ENCODE measurements at regions of chr3 and their contacts with region 1.

Region 1: GRCh38 chr3:12484198-12484974 is at the start of gene TSEN2:
- DNase-seq: peak; percentile 97
- H3K4me3 ChIP-seq: peak within 1 kb of the TSS; percentile 92
- H3K27ac ChIP-seq: peak within 1 kb of the TSS; percentile 79
- H3K4me1 ChIP-seq: peaks cover 25% of the 10 kb centered on the region
- CTCF ChIP-seq: 0 out of 2 replicates have a peak, but pooled peaks have one; percentile 31
- total RNA-seq, gene TSEN2: 33.2 and 40.7 TPM in 2 replicates

Region 2: DNA sequence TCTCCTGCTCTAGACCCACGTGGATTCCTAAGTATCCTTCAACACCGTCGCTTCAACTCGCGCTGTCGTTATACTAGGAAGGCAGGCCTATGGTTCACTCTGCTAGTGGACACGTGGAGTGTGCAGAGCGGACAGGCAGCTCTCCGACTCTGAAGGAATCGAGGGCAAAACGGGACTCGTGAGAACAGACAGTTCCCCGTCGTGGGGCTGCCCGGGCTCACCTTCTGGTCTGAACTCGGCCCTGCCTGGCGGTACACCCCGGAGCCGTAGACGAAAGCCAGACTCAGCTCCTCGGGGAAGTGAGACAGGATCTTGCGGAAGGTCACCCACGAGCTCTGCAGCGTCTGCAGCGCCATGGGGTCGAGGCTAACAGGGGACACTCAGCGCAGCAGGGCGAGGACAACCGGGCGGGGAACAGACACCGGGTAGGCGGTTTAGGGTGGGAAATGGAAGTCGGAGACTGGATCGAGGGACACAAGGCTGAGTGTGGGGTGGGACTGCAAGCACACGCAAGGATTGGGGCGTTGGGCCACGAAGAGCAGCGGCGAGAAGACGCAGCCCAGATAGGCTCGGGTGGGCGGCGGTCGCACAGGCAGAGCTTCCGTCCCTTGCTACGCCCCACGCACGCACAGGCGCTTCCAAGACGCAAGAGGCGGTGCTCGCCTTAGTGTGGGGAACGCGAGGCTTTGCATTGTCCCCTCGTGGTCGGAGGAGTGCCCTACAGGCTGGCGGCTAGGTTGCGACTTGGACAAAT is 637.9 kb before region 1 on chr3 and contains the start of gene TAMM41:
- CTCF ChIA-PET with region 1: no interaction called
- POLR2A ChIA-PET with region 1: no interaction called
- intact Hi-C with region 1: loop called (anchors 5 kb)
- DNase-seq: peak; percentile 88
- H3K4me3 ChIP-seq: peak within 1 kb of the TSS; percentile 87
- H3K27ac ChIP-seq: peak within 1 kb of the TSS; percentile 14
- H3K4me1 ChIP-seq: peaks cover 6% of the 10 kb centered on the region
- CTCF ChIP-seq: peak; percentile 77
- total RNA-seq, gene TAMM41: 14.6 and 19.2 TPM in 2 replicates

Region 3: DNA sequence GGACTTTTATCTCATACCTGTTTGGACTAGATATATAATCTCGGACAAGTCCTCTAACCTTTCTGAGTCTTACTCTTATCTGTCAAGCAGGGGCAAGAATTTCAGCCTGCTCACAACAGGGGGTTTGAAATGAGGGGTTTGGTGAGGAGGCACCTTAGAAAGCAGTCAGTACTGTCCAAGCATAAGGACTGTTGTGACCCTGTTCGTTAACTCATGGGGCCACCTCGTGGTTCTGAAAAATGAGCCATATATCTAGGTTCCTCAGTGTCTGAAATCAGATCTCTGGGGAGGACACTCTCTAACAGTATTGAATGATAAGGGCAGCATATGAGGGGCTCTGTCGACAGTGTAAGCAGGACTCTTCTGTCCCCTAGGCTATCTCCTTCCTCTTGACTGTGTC is 318.5 kb before region 1 on chr3:
- CTCF ChIA-PET with region 1: no interaction called
- POLR2A ChIA-PET with region 1: no interaction called
- intact Hi-C with region 1: no loop called
- DNase-seq: no peak
- H3K4me3 ChIP-seq: no peak overlapping the region
- H3K27ac ChIP-seq: no peak overlapping the region
- H3K4me1 ChIP-seq: no peaks in the 10 kb centered on the region
- CTCF ChIP-seq: no peak

Region 4: GRCh38 chr3:12175844-12176453 is 308.4 kb before region 1 on chr3:
- CTCF ChIA-PET with region 1: no interaction called
- POLR2A ChIA-PET with region 1: no interaction called
- intact Hi-C with region 1: loop called (anchors 5 kb)
- DNase-seq: peak; percentile 27
- H3K4me3 ChIP-seq: no peak overlapping the region
- H3K27ac ChIP-seq: no peak overlapping the region
- H3K4me1 ChIP-seq: no peaks in the 10 kb centered on the region
- CTCF ChIP-seq: peak; percentile 76

Region 5: DNA sequence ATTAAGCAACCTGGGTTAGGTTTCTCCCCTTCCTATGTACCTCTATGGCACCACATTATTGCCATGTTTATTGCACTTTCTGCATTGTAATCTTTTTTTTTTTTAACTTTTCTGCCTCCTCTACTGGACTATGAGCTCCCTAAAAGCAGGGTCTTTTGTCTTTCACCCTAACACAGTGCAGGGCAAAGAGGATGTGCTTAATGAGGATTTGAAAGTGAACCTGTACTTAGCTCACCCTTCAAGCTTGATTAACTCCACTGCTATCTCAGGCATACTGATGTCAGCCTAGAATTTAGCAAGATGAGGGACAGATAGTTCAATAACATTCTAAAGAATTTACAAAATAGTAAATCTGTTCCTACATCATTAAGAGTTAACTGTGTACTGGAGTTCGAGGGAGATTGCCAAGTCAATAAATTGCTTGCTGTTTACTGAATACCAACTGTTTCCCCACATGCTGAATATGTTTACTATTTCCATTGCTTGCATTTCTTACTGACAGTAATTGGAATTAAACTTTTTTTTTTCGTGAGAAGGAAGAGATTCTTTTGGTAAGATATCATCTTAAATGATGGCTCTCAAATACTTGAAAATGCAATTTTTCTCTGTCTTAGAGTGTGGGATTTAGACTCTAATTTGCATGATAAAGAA is 211.2 kb before region 1 on chr3:
- CTCF ChIA-PET with region 1: no interaction called
- POLR2A ChIA-PET with region 1: interaction called, 3 read pairs
- intact Hi-C with region 1: loop called (anchors 10 kb)
- DNase-seq: peak; percentile 19
- H3K4me3 ChIP-seq: no peak overlapping the region
- H3K27ac ChIP-seq: no peak overlapping the region
- H3K4me1 ChIP-seq: peaks cover 10% of the 10 kb centered on the region
- CTCF ChIP-seq: no peak

Region 6: GRCh38 chr3:12716605-12717151 is 232.3 kb after region 1 on chr3:
- CTCF ChIA-PET with region 1: no interaction called
- POLR2A ChIA-PET with region 1: no interaction called
- intact Hi-C with region 1: no loop called
- DNase-seq: peak; percentile 56
- H3K4me3 ChIP-seq: no peak overlapping the region
- H3K27ac ChIP-seq: no peak overlapping the region
- H3K4me1 ChIP-seq: peaks cover 21% of the 10 kb centered on the region
- CTCF ChIP-seq: no peak

Region 7: DNA sequence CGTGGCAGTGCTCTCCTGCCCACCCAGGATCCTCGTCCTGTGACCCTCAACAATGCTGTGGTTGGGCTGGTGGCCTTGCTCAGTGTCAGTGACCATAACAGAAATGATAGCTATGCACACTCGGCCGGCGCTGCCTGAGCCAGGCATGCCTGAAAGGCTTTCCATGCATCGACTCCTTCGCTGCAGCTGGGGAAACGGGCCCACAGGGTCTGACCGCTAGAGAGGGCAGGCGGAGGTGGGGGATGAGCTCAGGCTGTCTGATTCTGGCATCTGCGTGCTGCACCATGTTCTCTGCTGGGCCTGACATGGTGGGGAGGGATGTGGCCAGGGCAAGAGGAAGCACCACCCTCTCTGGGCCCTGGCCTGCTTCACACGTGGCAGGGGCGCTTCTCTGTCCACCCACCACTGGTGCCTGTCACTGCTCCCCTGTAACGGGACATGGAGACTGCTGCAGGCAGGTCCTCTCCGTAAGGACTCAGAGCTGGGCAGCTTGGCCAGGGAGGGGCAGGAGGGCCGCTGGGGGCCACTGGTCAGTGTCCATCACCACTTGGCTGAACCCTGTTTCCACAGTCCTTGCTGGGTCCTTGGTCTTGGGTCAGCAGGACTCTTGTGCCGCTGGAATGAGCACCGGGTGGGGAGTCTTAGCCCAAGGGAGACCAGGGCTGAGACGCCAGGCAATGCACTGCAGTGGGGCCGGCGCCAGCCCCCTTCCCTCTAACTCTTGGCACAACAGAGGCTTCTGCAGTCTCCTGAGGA is 421.1 kb after region 1 on chr3:
- CTCF ChIA-PET with region 1: no interaction called
- POLR2A ChIA-PET with region 1: no interaction called
- intact Hi-C with region 1: no loop called
- DNase-seq: no peak
- H3K4me3 ChIP-seq: no peak overlapping the region
- H3K27ac ChIP-seq: no peak overlapping the region
- H3K4me1 ChIP-seq: peaks cover 12% of the 10 kb centered on the region
- CTCF ChIP-seq: no peak